Activated naive CD4-positive, alpha-beta T cell treated with anti-CD3 and anti-CD28 coated beads for 36 hours (primary cell): ENCODE measurements at regions of chr1 and their contacts with region 1.

Region 1: GRCh38 chr1:66258404-66259105 is 275.4 kb upstream of the SGIP1 start:
- DNase-seq: peak; percentile 43
- H3K4me3 Mint-ChIP-seq: no peak overlapping the region
- H3K27ac Mint-ChIP-seq: peak overlapping the region; percentile 3
- H3K4me1 Mint-ChIP-seq: peaks cover 84% of the 10 kb centered on the region
- H3K27me3 Mint-ChIP-seq: no peaks in the 10 kb centered on the region

Region 2: GRCh38 chr1:66339944-66340343 is 81.4 kb after region 1 on chr1:
- CTCF ChIA-PET with region 1: interaction called, 11 read pairs
- intact Hi-C with region 1: loop called (anchors 1 kb)
- DNase-seq: no peak
- H3K4me3 Mint-ChIP-seq: peak overlapping the region; percentile 65
- H3K27ac Mint-ChIP-seq: peak overlapping the region; percentile 82
- H3K4me1 Mint-ChIP-seq: peaks cover 67% of the 10 kb centered on the region
- H3K27me3 Mint-ChIP-seq: no peaks in the 10 kb centered on the region